WTC11 (cell line): ENCODE measurements at regions of chr2 and their contacts with region 1.

Region 1: DNA sequence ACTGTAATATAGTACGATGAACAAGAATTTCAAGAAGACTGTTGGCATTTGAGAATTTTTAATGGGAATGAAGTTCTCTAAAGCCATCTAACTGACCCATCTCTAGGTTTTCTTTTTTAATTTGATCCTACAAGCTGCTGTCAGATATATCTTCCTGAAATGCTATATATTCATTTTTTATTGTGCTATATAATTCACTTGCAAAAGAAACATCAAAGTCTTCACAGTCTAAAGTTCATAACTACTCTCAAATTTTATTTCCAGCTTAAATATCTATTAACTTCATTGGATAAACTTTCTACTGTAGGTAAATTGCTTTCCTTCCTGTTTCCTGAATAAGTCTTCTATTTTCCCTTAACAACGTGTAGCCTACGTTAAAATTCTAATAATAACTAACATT is 3.7 kb downstream of the SCYGR2 start:
- DNase-seq: no peak
- ATAC-seq: no peak
- H3K4me3 Mint-ChIP-seq: no peak overlapping the region
- H3K27ac Mint-ChIP-seq: no peak overlapping the region
- H3K4me1 Mint-ChIP-seq: peaks cover 11% of the 10 kb centered on the region
- H3K27me3 Mint-ChIP-seq: no peaks in the 10 kb centered on the region
- CTCF ChIP-seq: no peak

Region 2: GRCh38 chr2:227661019-227661649 is 58.8 kb after region 1 on chr2:
- CTCF ChIA-PET with region 1: interaction called, 12 read pairs
- POLR2A ChIA-PET with region 1: no interaction called
- DNase-seq: peak; percentile 38
- ATAC-seq: peak; percentile 86
- H3K4me3 Mint-ChIP-seq: no peak overlapping the region
- H3K27ac Mint-ChIP-seq: no peak overlapping the region
- H3K4me1 Mint-ChIP-seq: peaks cover 17% of the 10 kb centered on the region
- H3K27me3 Mint-ChIP-seq: peaks cover 4% of the 10 kb centered on the region
- CTCF ChIP-seq: no peak